ENCODE measurements at regions of chr15 and their contacts with region 1.

Region 1: GRCh38 chr15:101773496-101774105 is 29.7 kb upstream of the OR4F6 start:
- DNase-seq: no peak
- H3K4me3 ChIP-seq: no peak overlapping the region
- H3K27ac ChIP-seq: no peak overlapping the region
- H3K4me1 ChIP-seq: no peaks in the 10 kb centered on the region
- H3K27me3 ChIP-seq: peaks cover 2% of the 10 kb centered on the region
- CTCF ChIP-seq: peak; percentile 3 to 52

Region 2: DNA sequence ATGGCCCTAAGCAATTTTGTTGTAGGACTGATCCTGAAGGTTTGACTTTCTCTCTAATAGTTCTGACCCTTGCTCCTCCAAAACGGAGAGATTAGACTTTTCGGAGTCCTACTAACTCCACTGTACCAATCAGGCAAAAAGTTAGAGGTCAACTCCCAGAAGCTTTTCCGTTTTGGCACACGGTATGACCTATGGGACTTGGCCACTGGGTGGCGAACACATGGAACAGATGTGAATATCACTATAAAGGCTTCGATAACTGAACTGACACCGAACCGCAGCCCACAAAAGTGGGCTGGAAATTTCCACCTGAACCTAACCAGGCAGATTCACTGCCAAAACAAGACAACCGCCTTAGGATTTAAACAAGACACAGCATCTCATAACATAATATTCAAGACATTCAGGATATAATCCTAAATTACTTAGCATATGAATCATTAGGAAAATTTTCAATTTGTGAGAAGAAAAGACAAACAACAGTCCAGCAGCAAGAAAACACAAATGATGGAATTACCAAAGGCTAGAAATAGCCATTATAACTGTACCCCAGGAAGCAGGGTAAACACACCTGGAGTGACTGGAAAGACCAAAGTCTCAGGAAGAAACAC is 109.2 kb before region 1 on chr15:
- CTCF ChIA-PET with region 1: no interaction called
- dilution Hi-C with region 1: no loop called
- in situ Hi-C with region 1: no loop called
- intact Hi-C with region 1: loop called (anchors 10 kb)
- DNase-seq: no peak
- H3K4me3 ChIP-seq: no peak overlapping the region
- H3K27ac ChIP-seq: no peak overlapping the region
- H3K4me1 ChIP-seq: no peaks in the 10 kb centered on the region
- H3K27me3 ChIP-seq: no peaks in the 10 kb centered on the region
- CTCF ChIP-seq: peak; percentile 31 to 32